H1 (cell line): ENCODE measurements at regions of chr4 and their contacts with region 1.

Region 1: DNA sequence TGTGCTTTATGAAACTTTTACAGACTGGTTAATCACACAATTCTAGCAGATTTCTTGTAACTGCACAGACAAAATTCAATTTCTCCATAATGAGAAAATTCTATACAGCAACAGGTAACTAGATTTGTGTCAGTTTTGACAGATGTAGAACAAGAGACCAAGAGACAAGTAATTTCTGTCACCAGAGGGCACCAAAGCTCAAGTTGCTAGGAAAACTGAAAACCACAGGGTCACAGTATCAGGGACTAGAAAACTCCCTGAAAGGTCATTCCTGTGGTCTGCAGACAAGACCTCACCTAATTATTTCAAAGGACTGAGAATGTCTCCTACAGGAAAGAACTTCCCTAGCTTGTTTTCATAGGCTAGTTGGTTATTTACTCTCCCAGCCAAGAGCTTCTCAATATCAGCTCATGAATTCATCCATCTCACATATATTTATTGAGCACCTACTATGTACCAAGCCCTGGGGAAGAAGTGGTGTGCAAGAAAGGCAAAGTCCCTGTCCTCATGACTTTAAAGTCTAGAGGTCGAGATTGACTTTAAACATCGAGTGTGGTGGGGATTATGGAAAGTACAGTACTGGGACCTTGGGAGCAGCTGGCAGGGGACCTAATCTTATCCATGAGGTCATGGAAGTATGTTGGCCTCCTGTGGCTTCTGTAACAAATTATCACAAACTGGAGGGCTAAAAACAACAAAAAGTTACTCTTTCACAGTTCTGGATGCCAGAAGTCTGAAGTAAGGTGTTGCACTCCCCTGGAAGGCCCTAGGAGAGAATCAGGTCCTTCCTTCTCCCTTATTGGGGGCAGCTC is 47.8 kb upstream of the SETD7 start:
- DNase-seq: no peak
- H3K4me3 ChIP-seq: no peak overlapping the region
- H3K27ac ChIP-seq: no peak overlapping the region
- H3K4me1 ChIP-seq: no peaks in the 10 kb centered on the region
- H3K27me3 ChIP-seq: peaks cover 0 to 2% (median 0%) of the 10 kb centered on the region in 4 experiments; a peak in 1 of 7 replicates
- CTCF ChIP-seq: peak in 2 of 3 experiments; percentile 70 to 77; a peak in 3 of 4 replicates
- EP300 ChIP-seq: no peak
- POLR2A ChIP-seq: no peak
- RAD21 ChIP-seq: peak; percentile 81 to 91

Region 2: DNA sequence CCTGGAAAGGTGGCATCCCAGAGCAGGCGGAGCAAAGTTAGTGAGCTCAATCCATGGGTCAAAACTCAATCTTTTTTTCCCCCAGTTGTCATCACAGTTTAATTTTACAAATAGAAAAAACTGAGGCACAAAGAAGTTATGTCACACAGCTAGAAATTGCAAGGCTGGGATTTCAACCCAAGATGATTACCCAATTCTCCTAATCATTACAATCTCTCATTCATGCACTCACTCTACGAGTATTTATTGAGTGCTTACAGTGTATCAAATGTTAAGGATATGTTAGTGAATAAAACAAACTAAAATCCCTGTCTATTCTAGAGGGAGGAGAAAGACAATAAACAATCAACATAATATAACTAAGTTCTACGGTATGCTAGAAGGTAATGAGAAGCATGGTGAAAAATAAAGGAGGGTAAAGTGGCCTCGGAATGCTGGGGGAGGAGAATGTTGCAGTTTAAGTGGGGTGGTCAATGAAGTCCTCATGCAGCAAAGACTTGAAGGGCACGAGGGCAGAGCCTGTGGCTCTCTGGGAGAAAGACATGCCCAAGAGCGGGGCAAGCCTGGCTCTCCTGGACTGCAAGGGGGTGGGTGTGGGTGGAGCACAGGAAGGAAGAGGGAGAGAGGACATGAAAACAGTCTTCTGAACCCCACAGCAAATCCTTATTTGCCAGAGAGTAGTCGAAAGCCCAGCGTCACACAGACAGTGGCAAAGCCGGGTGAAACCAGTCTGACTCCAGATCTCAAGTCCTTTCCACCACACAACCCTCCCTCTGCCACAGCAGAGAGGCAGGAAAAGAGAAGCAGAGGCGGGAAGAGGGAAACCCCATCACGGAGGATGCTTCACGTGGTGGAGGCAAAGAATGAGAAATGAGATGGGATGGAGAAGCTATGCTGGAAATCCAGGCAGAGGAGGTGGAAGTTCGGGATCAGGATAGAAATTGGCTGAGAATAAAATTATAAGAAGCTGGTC is 101.6 kb before region 1 on chr4:
- CTCF ChIA-PET with region 1: interaction called, 10 read pairs
- POLR2A ChIA-PET with region 1: no interaction called
- DNase-seq: no peak
- H3K4me3 ChIP-seq: no peak overlapping the region
- H3K27ac ChIP-seq: no peak overlapping the region
- H3K4me1 ChIP-seq: no peaks in the 10 kb centered on the region; a peak in 1 of 7 replicates
- H3K27me3 ChIP-seq: no peaks in the 10 kb centered on the region
- CTCF ChIP-seq: no peak
- EP300 ChIP-seq: no peak
- POLR2A ChIP-seq: no peak
- RAD21 ChIP-seq: no peak

Region 3: DNA sequence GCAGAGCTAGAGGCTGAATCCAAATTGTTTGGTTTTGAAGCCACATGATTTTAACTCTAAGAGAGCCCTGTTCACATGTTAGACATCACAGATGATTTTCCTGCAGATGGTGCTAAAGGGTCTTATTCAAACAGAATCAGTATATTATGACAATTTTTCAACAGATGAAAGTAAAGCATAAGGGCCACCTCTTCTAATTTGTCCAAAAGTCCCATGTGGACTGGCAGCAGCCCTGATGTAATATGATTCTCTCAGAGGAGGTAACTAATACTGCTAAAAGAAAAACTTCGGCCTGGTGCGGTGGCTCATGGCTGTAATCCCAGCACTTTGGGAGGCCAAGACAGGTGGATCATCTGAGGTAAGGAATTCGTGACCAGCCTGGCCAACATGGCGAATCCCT is 21.7 kb before region 1 on chr4:
- CTCF ChIA-PET with region 1: interaction called, 43 read pairs
- POLR2A ChIA-PET with region 1: no interaction called
- DNase-seq: no peak
- H3K4me3 ChIP-seq: no peak overlapping the region
- H3K27ac ChIP-seq: no peak overlapping the region
- H3K4me1 ChIP-seq: peaks cover 0 to 4% (median 0%) of the 10 kb centered on the region in 4 experiments; a peak in 2 of 7 replicates
- H3K27me3 ChIP-seq: peaks cover 1 to 9% (median 6%) of the 10 kb centered on the region in 4 experiments; a peak in 6 of 7 replicates
- CTCF ChIP-seq: no peak
- EP300 ChIP-seq: no peak
- POLR2A ChIP-seq: no peak
- RAD21 ChIP-seq: no peak

Region 4: DNA sequence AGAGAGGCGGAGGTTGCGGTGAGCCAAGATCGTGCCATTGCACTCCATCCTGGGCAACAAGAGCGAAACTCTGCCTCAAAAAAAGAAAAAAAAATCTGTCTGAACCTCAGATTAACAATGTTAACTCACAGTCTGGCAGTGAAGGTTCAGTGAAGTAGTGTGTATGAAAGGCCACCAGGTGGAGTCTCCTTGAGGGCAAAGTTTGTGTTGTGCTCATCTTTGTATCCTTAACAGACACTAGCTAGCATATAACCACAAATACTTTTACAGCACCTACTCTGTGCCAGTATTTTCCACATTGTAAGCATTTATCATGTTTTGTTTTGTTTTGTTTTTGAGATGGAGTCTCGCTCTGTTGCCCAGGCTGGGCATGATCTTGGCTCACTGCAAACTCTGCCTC is 15.9 kb after region 1 on chr4:
- CTCF ChIA-PET with region 1: interaction called, 134 read pairs
- POLR2A ChIA-PET with region 1: interaction called, 3 read pairs
- DNase-seq: no peak
- H3K4me3 ChIP-seq: no peak overlapping the region
- H3K27ac ChIP-seq: no peak overlapping the region
- H3K4me1 ChIP-seq: peaks cover under 1% of the 10 kb centered on the region in 4 experiments; a peak in 5 of 7 replicates
- H3K27me3 ChIP-seq: peaks cover 22 to 35% (median 27%) of the 10 kb centered on the region in 4 experiments
- CTCF ChIP-seq: peak in 2 of 3 experiments; percentile 67 to 71; a peak in 3 of 4 replicates
- EP300 ChIP-seq: no peak
- POLR2A ChIP-seq: no peak
- RAD21 ChIP-seq: peak; percentile 38 to 58; a peak in 3 of 4 replicates

Region 5: DNA sequence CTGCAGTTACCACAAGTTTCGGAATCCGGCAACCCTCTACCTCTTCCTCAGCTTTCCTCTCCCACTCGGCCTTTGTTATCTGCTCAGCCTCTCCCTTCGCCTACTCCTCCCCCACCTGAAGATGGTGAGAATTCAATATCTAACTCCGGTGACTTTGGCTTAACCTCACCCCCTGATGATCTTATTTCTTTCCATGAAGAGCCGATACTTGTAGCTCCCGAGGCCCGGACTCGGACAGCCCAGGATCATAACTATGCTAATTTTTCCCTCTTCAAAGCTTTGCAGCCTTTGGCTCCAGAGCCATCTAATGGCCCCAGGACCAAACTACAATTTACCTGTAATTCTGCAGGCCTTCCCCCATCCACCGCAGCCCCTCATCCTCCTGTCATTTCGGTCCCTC is 29.9 kb after region 1 on chr4:
- CTCF ChIA-PET with region 1: interaction called, 63 read pairs
- POLR2A ChIA-PET with region 1: interaction called, 5 read pairs
- DNase-seq: peak in 1 of 2 experiments; percentile 63
- H3K4me3 ChIP-seq: peak overlapping the region in 2 of 4 experiments; percentile 23 to 45; a peak in 3 of 8 replicates
- H3K27ac ChIP-seq: no peak overlapping the region
- H3K4me1 ChIP-seq: peaks cover 0 to 5% (median under 1%) of the 10 kb centered on the region in 4 experiments; a peak in 3 of 7 replicates
- H3K27me3 ChIP-seq: peaks cover 4 to 27% (median 15%) of the 10 kb centered on the region in 4 experiments
- CTCF ChIP-seq: peak; percentile 40 to 68 (median 62)
- EP300 ChIP-seq: no peak
- POLR2A ChIP-seq: no peak
- RAD21 ChIP-seq: peak; percentile 83

Region 6: GRCh38 chr4:139651282-139652194 is 47.8 kb after region 1 on chr4:
- CTCF ChIA-PET with region 1: interaction called, 318 read pairs
- POLR2A ChIA-PET with region 1: interaction called, 3 read pairs
- DNase-seq: peak in 1 of 2 experiments; percentile 79
- H3K4me3 ChIP-seq: no peak overlapping the region
- H3K27ac ChIP-seq: no peak overlapping the region
- H3K4me1 ChIP-seq: no peaks in the 10 kb centered on the region; a peak in 1 of 7 replicates
- H3K27me3 ChIP-seq: no peaks in the 10 kb centered on the region; a peak in 1 of 7 replicates
- CTCF ChIP-seq: peak; percentile 64 to 92 (median 91)
- EP300 ChIP-seq: no peak
- POLR2A ChIP-seq: no peak
- RAD21 ChIP-seq: peak; percentile 77 to 82